ENCODE measurements at regions of chr1 and their contacts with region 1.

Region 1: GRCh38 chr1:245045087-245045881 is 109.5 kb upstream of the KIF26B start:
- DNase-seq: no peak
- H3K4me3 ChIP-seq: no peak overlapping the region
- H3K4me3 Mint-ChIP-seq: no peak overlapping the region
- H3K27ac ChIP-seq: no peak overlapping the region
- H3K27ac Mint-ChIP-seq: peak overlapping the region in 1 of 7 donors; percentile 31
- H3K4me1 ChIP-seq: no peaks in the 10 kb centered on the region
- H3K4me1 Mint-ChIP-seq: peaks cover 0 to 3% (median under 1%) of the 10 kb centered on the region in 4 donors
- H3K27me3 ChIP-seq: no peaks in the 10 kb centered on the region
- H3K27me3 Mint-ChIP-seq: peaks cover 0 to 1% of the 10 kb centered on the region in 2 donors

Region 2: DNA sequence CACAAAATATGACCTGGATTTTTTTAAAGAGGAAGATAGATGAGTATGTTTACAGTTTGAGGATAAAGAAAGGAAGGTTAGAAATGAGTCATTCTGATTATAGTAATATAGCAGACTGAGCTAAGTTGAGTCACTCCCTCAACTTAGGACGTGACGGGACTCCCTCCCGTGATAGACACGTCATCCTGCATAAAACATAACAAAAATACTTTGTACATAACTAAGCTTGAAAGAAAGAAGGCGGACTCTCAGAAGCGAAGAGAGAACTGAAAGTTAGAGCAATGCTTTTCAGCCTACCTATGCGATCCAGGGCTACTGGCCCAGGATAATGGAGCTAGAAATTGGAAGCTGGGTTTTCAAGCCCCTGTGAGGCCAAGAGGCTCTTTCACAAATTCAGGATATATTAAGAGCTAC is 445.3 kb before region 1 on chr1:
- CTCF ChIA-PET with region 1: interaction called, 75 read pairs
- POLR2A ChIA-PET with region 1: no interaction called
- intact Hi-C with region 1: loop called (anchors 1 kb)
- DNase-seq: peak; percentile 18 to 72 (median 33)
- H3K4me3 ChIP-seq: no peak overlapping the region
- H3K4me3 Mint-ChIP-seq: peak overlapping the region in 6 of 8 donors; percentile 28 to 78 (median 58)
- H3K27ac ChIP-seq: no peak overlapping the region
- H3K27ac Mint-ChIP-seq: peak overlapping the region; percentile 78 to 94 (median 86)
- H3K4me1 ChIP-seq: peaks cover 3% of the 10 kb centered on the region
- H3K4me1 Mint-ChIP-seq: peaks cover 3 to 11% (median 10%) of the 10 kb centered on the region in 4 donors
- H3K27me3 ChIP-seq: no peaks in the 10 kb centered on the region
- H3K27me3 Mint-ChIP-seq: peaks cover 1 to 2% of the 10 kb centered on the region in 2 donors

Region 3: GRCh38 chr1:244652699-244653466 is 392.4 kb before region 1 on chr1 and contains the start of gene DESI2:
- CTCF ChIA-PET with region 1: interaction called, 9 read pairs
- POLR2A ChIA-PET with region 1: no interaction called
- intact Hi-C with region 1: loop called (anchors 1 kb)
- DNase-seq: peak; percentile 97 to 100 (median 99)
- H3K4me3 ChIP-seq: peak within 1 kb of the TSS; percentile 61 to 73
- H3K4me3 Mint-ChIP-seq: peak within 1 kb of the TSS; percentile 80 to 91 (median 86)
- H3K27ac ChIP-seq: peak within 1 kb of the TSS; percentile 89
- H3K27ac Mint-ChIP-seq: peak within 1 kb of the TSS; percentile 43 to 95 (median 93)
- H3K4me1 ChIP-seq: peaks cover 43% of the 10 kb centered on the region
- H3K4me1 Mint-ChIP-seq: peaks cover 21 to 24% (median 22%) of the 10 kb centered on the region in 4 donors
- H3K27me3 ChIP-seq: no peaks in the 10 kb centered on the region
- H3K27me3 Mint-ChIP-seq: no peaks in the 10 kb centered on the region
- total RNA-seq, gene DESI2: 21.1 to 22.8 TPM

Region 4: GRCh38 chr1:244807138-244807537 is 238.1 kb before region 1 on chr1:
- CTCF ChIA-PET with region 1: interaction called, 231 read pairs
- POLR2A ChIA-PET with region 1: interaction called, 11 read pairs
- intact Hi-C with region 1: no loop called
- DNase-seq: no peak
- H3K4me3 ChIP-seq: no peak overlapping the region
- H3K4me3 Mint-ChIP-seq: no peak overlapping the region
- H3K27ac ChIP-seq: no peak overlapping the region
- H3K27ac Mint-ChIP-seq: peak overlapping the region in 2 of 7 donors; percentile 29 to 33
- H3K4me1 ChIP-seq: no peaks in the 10 kb centered on the region
- H3K4me1 Mint-ChIP-seq: no peaks in the 10 kb centered on the region
- H3K27me3 ChIP-seq: no peaks in the 10 kb centered on the region
- H3K27me3 Mint-ChIP-seq: peaks cover 2 to 11% of the 10 kb centered on the region in 2 donors

Region 5: DNA sequence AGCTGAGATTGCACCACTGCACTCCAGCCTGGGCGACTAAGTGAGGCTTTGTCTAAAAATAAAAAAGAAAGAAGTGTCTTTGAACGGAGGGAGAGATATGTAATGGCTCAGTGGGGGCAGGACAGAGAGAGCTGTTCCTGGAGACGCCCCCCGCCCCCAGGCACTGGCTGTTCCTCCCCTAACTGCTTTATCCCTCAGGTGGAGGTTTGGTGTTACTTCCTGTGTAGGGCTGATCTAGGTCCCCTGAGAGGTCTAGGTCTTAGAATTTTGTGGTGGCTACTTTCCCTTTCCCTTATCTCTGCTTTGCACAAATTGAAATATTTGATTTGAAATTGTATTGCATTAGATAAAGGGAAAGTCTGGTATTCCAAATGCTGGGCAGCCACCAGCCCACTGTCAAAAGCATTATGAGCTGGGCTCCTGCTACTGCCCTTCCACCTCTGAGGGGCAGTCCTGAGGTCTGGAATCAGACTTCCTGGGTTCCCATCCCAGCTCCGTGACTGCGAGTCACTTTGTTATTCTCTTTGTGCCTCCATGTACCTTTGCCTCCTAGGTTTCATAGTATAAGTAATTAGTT is 25.3 kb before region 1 on chr1:
- CTCF ChIA-PET with region 1: interaction called, 14 read pairs
- POLR2A ChIA-PET with region 1: no interaction called
- intact Hi-C with region 1: no loop called
- DNase-seq: no peak
- H3K4me3 ChIP-seq: no peak overlapping the region
- H3K4me3 Mint-ChIP-seq: no peak overlapping the region
- H3K27ac ChIP-seq: no peak overlapping the region
- H3K27ac Mint-ChIP-seq: no peak overlapping the region
- H3K4me1 ChIP-seq: no peaks in the 10 kb centered on the region
- H3K4me1 Mint-ChIP-seq: no peaks in the 10 kb centered on the region
- H3K27me3 ChIP-seq: no peaks in the 10 kb centered on the region
- H3K27me3 Mint-ChIP-seq: no peaks in the 10 kb centered on the region

Region 6: GRCh38 chr1:245031041-245031440 is 14.2 kb before region 1 on chr1:
- CTCF ChIA-PET with region 1: interaction called, 13 read pairs
- POLR2A ChIA-PET with region 1: no interaction called
- intact Hi-C with region 1: no loop called
- DNase-seq: no peak
- H3K4me3 ChIP-seq: no peak overlapping the region
- H3K4me3 Mint-ChIP-seq: no peak overlapping the region
- H3K27ac ChIP-seq: no peak overlapping the region
- H3K27ac Mint-ChIP-seq: no peak overlapping the region
- H3K4me1 ChIP-seq: peaks cover 6% of the 10 kb centered on the region
- H3K4me1 Mint-ChIP-seq: peaks cover 5 to 11% (median 7%) of the 10 kb centered on the region in 4 donors
- H3K27me3 ChIP-seq: no peaks in the 10 kb centered on the region
- H3K27me3 Mint-ChIP-seq: peaks cover 0 to 1% of the 10 kb centered on the region in 2 donors